CD4-positive, alpha-beta memory T cell (primary cell): ENCODE measurements at regions of chr3 and their contacts with region 1.

Region 1: GRCh38 chr3:71583566-71584449 is at the start of gene FOXP1:
- DNase-seq: peak; percentile 69 to 80 (median 75)
- H3K4me3 ChIP-seq: peak within 1 kb of the TSS; percentile 47 to 65
- H3K4me3 Mint-ChIP-seq: peak within 1 kb of the TSS; percentile 91 to 96 (median 94)
- H3K27ac ChIP-seq: peak within 1 kb of the TSS; percentile 64
- H3K27ac Mint-ChIP-seq: peak within 1 kb of the TSS; percentile 94 to 98 (median 97)
- H3K4me1 ChIP-seq: peaks cover 27% of the 10 kb centered on the region
- H3K4me1 Mint-ChIP-seq: peaks cover 14 to 53% (median 20%) of the 10 kb centered on the region in 4 donors
- H3K27me3 ChIP-seq: no peaks in the 10 kb centered on the region
- H3K27me3 Mint-ChIP-seq: no peaks in the 10 kb centered on the region
- total RNA-seq, gene FOXP1: 290 to 348 TPM

Region 2: GRCh38 chr3:70531063-70531657 is 1052.6 kb before region 1 on chr3:
- CTCF ChIA-PET with region 1: interaction called, 5 read pairs
- POLR2A ChIA-PET with region 1: no interaction called
- intact Hi-C with region 1: loop called (anchors 1 kb)
- DNase-seq: peak in 2 of 5 donors; percentile 3 to 8
- H3K4me3 ChIP-seq: no peak overlapping the region
- H3K4me3 Mint-ChIP-seq: no peak overlapping the region
- H3K27ac ChIP-seq: no peak overlapping the region
- H3K27ac Mint-ChIP-seq: no peak overlapping the region
- H3K4me1 ChIP-seq: no peaks in the 10 kb centered on the region
- H3K4me1 Mint-ChIP-seq: no peaks in the 10 kb centered on the region
- H3K27me3 ChIP-seq: no peaks in the 10 kb centered on the region
- H3K27me3 Mint-ChIP-seq: peaks cover 9 to 12% of the 10 kb centered on the region in 2 donors

Region 3: GRCh38 chr3:71006810-71007785 is 576.7 kb before region 1 on chr3:
- CTCF ChIA-PET with region 1: interaction called, 3 read pairs
- POLR2A ChIA-PET with region 1: interaction called, 3 read pairs
- intact Hi-C with region 1: loop called (anchors 1 kb)
- DNase-seq: peak in 4 of 5 donors; percentile 40 to 45 (median 42)
- H3K4me3 ChIP-seq: no peak overlapping the region
- H3K4me3 Mint-ChIP-seq: peak overlapping the region in 2 of 8 donors; percentile 47 to 66
- H3K27ac ChIP-seq: peak overlapping the region; percentile 68
- H3K27ac Mint-ChIP-seq: peak overlapping the region; percentile 64 to 98 (median 88)
- H3K4me1 ChIP-seq: peaks cover 70% of the 10 kb centered on the region
- H3K4me1 Mint-ChIP-seq: peaks cover 50 to 81% (median 68%) of the 10 kb centered on the region in 4 donors
- H3K27me3 ChIP-seq: no peaks in the 10 kb centered on the region
- H3K27me3 Mint-ChIP-seq: no peaks in the 10 kb centered on the region

Region 4: DNA sequence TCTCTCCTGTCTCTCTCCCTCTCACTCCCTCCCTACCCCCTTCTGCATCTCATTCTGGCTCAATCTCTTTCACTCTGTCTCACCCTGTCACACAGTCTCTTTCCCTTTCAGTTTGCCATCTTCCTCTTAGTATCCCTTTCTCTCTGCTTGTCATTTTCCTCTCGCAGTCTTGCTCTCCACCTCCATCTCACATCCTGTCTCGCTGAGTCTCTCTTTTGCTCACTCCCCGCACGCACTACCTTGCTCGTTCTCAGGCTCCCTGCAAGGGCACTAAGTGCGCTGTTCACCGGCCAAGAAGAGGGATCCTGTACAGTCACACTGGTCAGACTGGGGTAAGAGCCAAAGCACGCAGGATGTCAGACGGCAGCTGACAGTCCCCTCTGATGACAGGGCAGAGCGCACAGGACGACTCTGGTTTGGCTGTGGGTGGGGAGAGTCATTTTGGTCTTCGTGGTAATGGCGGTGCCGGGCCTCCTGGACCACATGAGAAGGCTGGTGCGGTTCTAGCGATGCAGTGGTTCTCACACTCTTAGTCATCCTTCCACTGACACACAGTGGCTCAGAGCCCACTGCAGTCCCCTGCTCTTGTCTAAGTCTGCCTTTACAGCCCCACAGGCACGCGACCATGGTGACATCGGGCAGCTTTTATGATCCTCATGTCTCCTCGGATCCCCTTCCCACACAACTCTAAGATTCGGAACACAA is 357.1 kb before region 1 on chr3:
- CTCF ChIA-PET with region 1: interaction called, 3 read pairs
- POLR2A ChIA-PET with region 1: no interaction called
- intact Hi-C with region 1: loop called (anchors 5 kb)
- DNase-seq: peak; percentile 64 to 88 (median 70)
- H3K4me3 ChIP-seq: peak overlapping the region; percentile 13 to 67
- H3K4me3 Mint-ChIP-seq: peak overlapping the region; percentile 79 to 93 (median 84)
- H3K27ac ChIP-seq: peak overlapping the region; percentile 40
- H3K27ac Mint-ChIP-seq: peak overlapping the region; percentile 83 to 95 (median 92)
- H3K4me1 ChIP-seq: peaks cover 41% of the 10 kb centered on the region
- H3K4me1 Mint-ChIP-seq: peaks cover 39 to 65% (median 53%) of the 10 kb centered on the region in 4 donors
- H3K27me3 ChIP-seq: no peaks in the 10 kb centered on the region
- H3K27me3 Mint-ChIP-seq: no peaks in the 10 kb centered on the region

Region 5: DNA sequence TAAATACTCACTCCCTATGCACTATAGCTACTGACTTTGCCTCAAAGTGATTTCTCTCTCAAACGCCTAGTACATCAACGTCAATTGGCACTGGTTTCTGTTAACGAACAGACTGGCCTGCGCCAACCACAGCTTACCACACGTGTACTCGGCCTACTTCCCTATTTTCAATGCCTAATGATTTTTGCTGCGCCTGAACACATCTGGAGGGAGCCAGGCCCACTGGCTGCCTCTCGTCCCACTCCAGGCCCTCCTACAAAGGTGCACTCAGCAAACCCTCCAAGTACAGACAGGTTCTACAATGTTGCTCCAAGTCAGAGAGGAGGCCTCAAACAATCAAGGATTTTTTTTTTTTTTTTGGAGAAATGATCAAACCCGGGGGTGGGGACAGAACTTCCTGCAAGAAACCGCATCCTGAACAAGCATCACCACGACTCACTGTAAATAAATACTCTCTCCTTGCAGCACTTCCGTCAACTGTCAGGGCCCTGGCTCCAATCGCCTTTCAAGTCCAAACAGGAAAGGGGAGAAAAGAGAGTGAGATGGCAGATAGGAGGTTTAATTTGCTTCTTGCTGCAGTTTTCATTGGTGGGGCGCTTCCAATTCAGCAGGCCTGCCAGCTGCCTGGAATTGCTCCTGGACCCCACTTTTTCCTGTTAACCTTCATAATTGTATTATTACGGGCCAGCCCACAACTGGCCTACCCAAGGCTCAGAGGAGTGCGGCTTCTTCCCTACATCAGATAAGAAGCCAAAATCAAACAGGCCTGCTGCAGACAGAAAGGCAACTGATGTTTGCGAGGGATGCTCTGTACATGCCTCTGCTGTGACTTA is 139.6 kb before region 1 on chr3:
- CTCF ChIA-PET with region 1: no interaction called
- POLR2A ChIA-PET with region 1: interaction called, 6 read pairs
- intact Hi-C with region 1: loop called (anchors 5 kb)
- DNase-seq: peak; percentile 89 to 95 (median 93)
- H3K4me3 ChIP-seq: peak overlapping the region; percentile 37 to 42
- H3K4me3 Mint-ChIP-seq: peak overlapping the region; percentile 27 to 92 (median 83)
- H3K27ac ChIP-seq: peak overlapping the region; percentile 67
- H3K27ac Mint-ChIP-seq: peak overlapping the region; percentile 96 to 100 (median 98)
- H3K4me1 ChIP-seq: peaks cover 100% of the 10 kb centered on the region
- H3K4me1 Mint-ChIP-seq: peaks cover 76 to 100% (median 91%) of the 10 kb centered on the region in 4 donors
- H3K27me3 ChIP-seq: no peaks in the 10 kb centered on the region
- H3K27me3 Mint-ChIP-seq: no peaks in the 10 kb centered on the region

Region 6: DNA sequence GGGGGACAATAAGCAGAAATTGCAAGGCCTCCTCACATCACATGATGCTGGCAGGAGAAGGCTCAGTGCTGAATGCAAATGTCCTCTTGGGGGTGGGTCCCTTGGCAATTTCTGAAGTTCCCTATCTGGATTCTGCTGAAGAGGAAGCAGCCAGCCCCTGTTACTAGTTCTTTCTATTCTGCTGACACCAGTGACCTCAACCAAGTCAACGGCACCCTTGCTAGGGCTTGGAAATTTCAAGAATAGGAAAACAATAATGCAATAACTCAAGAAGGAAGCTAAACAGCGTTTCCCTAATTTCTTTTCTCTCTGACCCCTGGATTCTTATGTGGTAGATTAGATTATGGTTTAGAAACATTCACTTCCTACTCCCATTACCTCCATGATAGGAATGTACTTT is 45.9 kb after region 1 on chr3:
- CTCF ChIA-PET with region 1: no interaction called
- POLR2A ChIA-PET with region 1: no interaction called
- intact Hi-C with region 1: no loop called
- DNase-seq: no peak
- H3K4me3 ChIP-seq: no peak overlapping the region
- H3K4me3 Mint-ChIP-seq: no peak overlapping the region
- H3K27ac ChIP-seq: no peak overlapping the region
- H3K27ac Mint-ChIP-seq: no peak overlapping the region
- H3K4me1 ChIP-seq: no peaks in the 10 kb centered on the region
- H3K4me1 Mint-ChIP-seq: peaks cover 0 to 1% (median under 1%) of the 10 kb centered on the region in 4 donors
- H3K27me3 ChIP-seq: no peaks in the 10 kb centered on the region
- H3K27me3 Mint-ChIP-seq: no peaks in the 10 kb centered on the region

Region 7: GRCh38 chr3:71681224-71681668 is 97.4 kb after region 1 on chr3:
- CTCF ChIA-PET with region 1: no interaction called
- POLR2A ChIA-PET with region 1: no interaction called
- intact Hi-C with region 1: no loop called
- DNase-seq: peak in 2 of 5 donors; percentile 8 to 20
- H3K4me3 ChIP-seq: no peak overlapping the region
- H3K4me3 Mint-ChIP-seq: no peak overlapping the region
- H3K27ac ChIP-seq: no peak overlapping the region
- H3K27ac Mint-ChIP-seq: peak overlapping the region in 5 of 7 donors; percentile 19 to 82 (median 67)
- H3K4me1 ChIP-seq: no peaks in the 10 kb centered on the region
- H3K4me1 Mint-ChIP-seq: peaks cover 7 to 15% (median 8%) of the 10 kb centered on the region in 4 donors
- H3K27me3 ChIP-seq: no peaks in the 10 kb centered on the region
- H3K27me3 Mint-ChIP-seq: no peaks in the 10 kb centered on the region

Region 8: DNA sequence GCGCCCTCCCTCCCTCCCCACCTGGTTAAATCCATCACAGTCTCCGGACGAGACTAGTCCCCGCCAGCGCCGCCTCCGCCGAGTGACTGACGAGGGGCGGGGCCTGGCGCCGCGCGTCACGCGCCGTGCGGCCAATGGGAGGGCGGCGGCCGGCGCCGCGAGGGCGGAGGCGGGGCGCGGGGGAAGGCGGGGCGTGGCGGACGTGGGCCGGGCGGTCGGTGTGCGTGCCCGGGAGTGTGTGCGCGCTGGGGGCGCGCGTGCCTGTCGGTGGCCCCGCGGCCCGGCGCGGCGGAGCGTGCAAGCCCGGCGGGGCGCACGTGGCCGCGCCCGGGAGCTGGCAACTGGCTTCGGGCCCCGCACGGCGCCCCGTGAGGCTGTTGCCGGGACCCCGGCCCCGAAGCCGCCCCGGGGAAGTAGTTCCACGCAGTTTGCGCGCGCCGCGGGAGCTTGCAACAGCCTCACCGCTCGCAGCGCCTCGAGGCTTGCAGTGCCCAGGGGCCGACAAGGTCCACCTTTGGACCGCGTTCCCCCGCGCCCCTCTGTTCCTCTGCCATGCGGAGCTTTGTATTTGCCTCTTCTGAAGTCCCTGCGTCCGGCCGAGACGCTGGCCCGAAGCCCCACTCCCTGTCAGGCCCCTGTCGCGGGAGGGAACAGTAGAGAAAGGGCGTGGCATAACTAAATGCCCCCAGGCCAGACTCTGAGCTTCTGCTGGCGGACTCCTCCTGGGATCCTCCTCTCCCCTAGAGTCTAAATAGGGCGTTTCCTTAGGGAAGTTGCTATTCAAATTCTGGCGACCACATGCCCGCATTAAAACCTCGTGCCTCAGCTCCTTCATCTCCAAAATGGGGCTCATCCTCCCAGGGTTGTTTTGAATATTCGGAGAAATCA is 863.5 kb after region 1 on chr3:
- CTCF ChIA-PET with region 1: no interaction called
- POLR2A ChIA-PET with region 1: interaction called, 3 read pairs
- intact Hi-C with region 1: loop called (anchors 10 kb)
- DNase-seq: peak; percentile 88 to 97 (median 95)
- H3K4me3 ChIP-seq: peak overlapping the region in 1 of 2 donors; percentile 79
- H3K4me3 Mint-ChIP-seq: peak overlapping the region; percentile 66 to 85 (median 73)
- H3K27ac ChIP-seq: peak overlapping the region; percentile 64
- H3K27ac Mint-ChIP-seq: peak overlapping the region in 4 of 7 donors; percentile 26 to 83 (median 68)
- H3K4me1 ChIP-seq: peaks cover 49% of the 10 kb centered on the region
- H3K4me1 Mint-ChIP-seq: peaks cover 34 to 43% (median 39%) of the 10 kb centered on the region in 4 donors
- H3K27me3 ChIP-seq: no peaks in the 10 kb centered on the region
- H3K27me3 Mint-ChIP-seq: peaks cover 9 to 10% of the 10 kb centered on the region in 2 donors